ENCODE measurements at regions of chr2 and their contacts with region 1.

Region 1: DNA sequence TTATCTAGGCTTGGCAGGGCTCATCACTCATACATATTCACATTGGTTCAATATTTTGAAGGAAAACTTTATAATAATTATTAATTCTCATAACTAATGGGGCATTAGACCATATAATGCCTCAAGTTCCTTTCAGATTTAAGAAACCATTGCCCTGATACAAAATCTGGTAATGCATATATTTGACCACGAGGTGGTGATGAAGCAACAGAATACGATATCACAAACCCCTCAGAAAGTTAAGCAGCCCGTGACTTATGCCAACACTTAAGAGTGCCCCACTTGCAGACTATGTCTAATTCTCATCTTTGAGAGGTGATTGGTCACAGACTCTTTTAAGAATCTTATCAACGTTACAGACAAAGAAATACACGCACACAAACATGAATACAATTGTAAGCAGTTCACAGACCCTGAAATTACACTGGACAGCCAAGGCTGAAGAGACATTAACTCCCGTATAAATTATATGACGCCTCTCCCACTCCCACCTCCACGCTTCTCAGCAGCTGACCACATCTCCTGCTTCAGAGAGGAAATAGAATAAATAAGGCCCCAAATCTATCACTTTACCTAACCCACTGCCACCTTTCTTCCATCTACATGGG is 20.7 kb upstream of the DNAH6 start:
- DNase-seq: no peak
- ATAC-seq: peak; percentile 90 to 95 (median 94)
- H3K4me3 ChIP-seq: no peak overlapping the region
- H3K27ac ChIP-seq: no peak overlapping the region
- H3K4me1 ChIP-seq: no peaks in the 10 kb centered on the region
- H3K27me3 ChIP-seq: no peaks in the 10 kb centered on the region
- CTCF ChIP-seq: peak; percentile 70 to 81 (median 71)
- POLR2A ChIP-seq: no peak

Region 2: GRCh38 chr2:84424152-84424551 is 71.5 kb before region 1 on chr2:
- intact Hi-C with region 1: no loop called
- DNase-seq: no peak
- ATAC-seq: no peak
- H3K4me3 ChIP-seq: no peak overlapping the region
- H3K27ac ChIP-seq: no peak overlapping the region
- H3K4me1 ChIP-seq: peaks cover 0 to 15% (median 0%) of the 10 kb centered on the region in 4 donors
- H3K27me3 ChIP-seq: no peaks in the 10 kb centered on the region
- CTCF ChIP-seq: peak in 3 of 4 donors; percentile 37 to 41 (median 39)
- POLR2A ChIP-seq: no peak

Region 3: GRCh38 chr2:84559838-84560237 is 64.2 kb after region 1 on chr2:
- intact Hi-C with region 1: no loop called
- DNase-seq: no peak
- ATAC-seq: no peak
- H3K4me3 ChIP-seq: no peak overlapping the region
- H3K27ac ChIP-seq: no peak overlapping the region
- H3K4me1 ChIP-seq: no peaks in the 10 kb centered on the region
- H3K27me3 ChIP-seq: no peaks in the 10 kb centered on the region
- CTCF ChIP-seq: no peak
- POLR2A ChIP-seq: no peak

Region 4: GRCh38 chr2:84649487-84650142 is 154.0 kb after region 1 on chr2:
- intact Hi-C with region 1: loop called in 1 of 2 experiments (anchors 10 kb)
- DNase-seq: no peak
- ATAC-seq: no peak
- H3K4me3 ChIP-seq: no peak overlapping the region
- H3K27ac ChIP-seq: no peak overlapping the region
- H3K4me1 ChIP-seq: no peaks in the 10 kb centered on the region
- H3K27me3 ChIP-seq: no peaks in the 10 kb centered on the region
- CTCF ChIP-seq: no peak
- POLR2A ChIP-seq: no peak

Region 5: DNA sequence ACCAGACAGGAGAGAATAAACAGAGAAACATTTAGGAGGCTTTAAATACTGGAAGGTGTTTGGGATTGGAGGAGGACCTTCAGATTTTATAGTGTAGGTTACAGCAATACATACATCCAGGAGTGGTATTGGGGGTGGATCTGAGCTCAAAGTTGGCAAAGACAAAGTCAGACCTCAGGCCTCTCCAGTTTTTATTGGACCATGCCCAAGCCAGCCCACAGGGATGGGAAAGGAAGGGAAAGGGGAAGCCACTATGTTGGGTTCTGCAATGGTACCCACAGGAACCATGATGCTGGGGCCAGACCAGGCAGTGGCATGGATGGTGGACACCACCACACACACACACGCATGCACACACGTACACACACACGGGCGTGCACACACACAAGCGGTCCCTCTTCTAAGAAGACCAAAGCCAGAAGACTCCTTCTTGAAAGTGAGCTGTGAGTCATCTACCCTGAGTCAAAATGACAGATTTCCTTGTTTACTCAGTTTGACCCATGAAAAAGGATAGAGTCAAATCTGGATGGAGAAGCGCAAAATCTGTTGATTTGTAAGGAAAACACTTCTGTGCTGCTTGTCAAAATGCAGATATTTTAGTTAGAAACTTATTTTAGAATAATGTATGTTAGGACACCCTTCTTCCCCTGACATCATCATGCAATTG is 297.3 kb after region 1 on chr2:
- intact Hi-C with region 1: no loop called
- DNase-seq: no peak
- ATAC-seq: no peak
- H3K4me3 ChIP-seq: no peak overlapping the region
- H3K27ac ChIP-seq: no peak overlapping the region
- H3K4me1 ChIP-seq: no peaks in the 10 kb centered on the region
- H3K27me3 ChIP-seq: no peaks in the 10 kb centered on the region
- CTCF ChIP-seq: no peak
- POLR2A ChIP-seq: no peak

Region 6: DNA sequence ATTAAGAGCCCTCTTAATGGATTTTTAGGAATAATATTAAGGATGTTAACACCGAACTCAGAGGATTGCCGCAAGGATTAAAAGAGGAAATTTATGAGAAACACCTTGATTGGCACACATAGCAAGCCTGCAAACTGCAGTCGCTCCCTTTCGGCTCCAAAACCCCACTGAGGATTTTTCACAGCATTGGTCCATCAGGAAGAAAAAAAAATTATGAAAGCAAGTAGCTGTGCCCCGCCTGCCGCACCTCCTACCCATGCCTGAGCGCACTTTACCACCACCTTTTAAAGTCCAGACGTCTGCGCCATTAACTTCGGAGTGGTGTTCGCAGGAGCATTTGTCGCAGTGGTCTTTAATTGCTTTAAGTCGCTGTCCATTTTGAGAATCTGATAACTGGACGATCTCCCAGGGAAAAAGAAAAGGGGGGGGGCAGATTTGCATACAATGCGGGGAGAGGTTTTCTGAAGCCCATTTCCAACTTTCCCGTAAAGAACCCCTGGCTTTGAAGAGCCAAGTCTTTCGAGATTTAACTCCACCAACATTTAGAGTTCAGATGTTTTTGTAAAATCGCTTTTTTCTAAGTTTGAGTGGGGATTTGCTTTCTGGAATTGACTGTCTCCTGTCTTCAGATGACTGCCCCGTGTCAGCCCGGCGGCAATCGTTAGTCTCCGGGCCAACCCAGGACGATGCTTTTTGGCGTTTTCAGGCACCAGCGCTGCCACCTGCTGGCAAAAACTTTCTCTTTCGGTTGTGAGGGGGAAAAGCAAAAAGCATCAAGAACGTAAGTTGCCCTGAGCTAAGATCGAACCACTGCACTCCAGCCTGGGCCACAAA is 386.2 kb after region 1 on chr2:
- intact Hi-C with region 1: loop called (anchors 10 kb)
- DNase-seq: peak; percentile 83 to 84 (median 83)
- ATAC-seq: peak; percentile 87 to 94 (median 90)
- H3K4me3 ChIP-seq: peak overlapping the region; percentile 41 to 55 (median 51)
- H3K27ac ChIP-seq: no peak overlapping the region
- H3K4me1 ChIP-seq: peaks cover 0 to 16% (median 4%) of the 10 kb centered on the region in 4 donors
- H3K27me3 ChIP-seq: peaks cover 0 to 3% of the 10 kb centered on the region in 2 donors
- CTCF ChIP-seq: peak; percentile 69 to 77 (median 74)
- POLR2A ChIP-seq: no peak